ENCODE measurements at regions of chr6 and their contacts with region 1.

Region 1: DNA sequence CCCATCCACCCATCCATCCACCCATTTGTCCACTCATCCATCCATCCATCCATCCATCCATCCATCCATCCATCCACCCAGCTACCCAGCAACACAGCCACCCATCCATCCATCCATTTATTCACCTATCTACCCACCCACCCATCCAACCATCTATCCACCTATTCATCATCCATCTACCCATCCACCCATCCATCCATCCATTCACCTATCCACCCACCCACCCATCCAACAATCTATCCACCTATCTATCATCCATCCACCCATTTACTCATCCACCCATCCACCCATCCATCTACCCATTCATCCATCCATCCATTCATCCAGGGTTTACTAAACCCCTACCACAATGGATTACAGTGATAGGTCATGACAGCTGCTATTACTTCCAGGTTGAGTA is 7.4 kb downstream of the SERPINB1 start:
- DNase-seq: no peak
- H3K4me3 ChIP-seq: no peak overlapping the region
- H3K27ac ChIP-seq: no peak overlapping the region
- H3K4me1 ChIP-seq: peaks cover 5% of the 10 kb centered on the region
- H3K27me3 ChIP-seq: no peaks in the 10 kb centered on the region
- CTCF ChIP-seq: no peak

Region 2: DNA sequence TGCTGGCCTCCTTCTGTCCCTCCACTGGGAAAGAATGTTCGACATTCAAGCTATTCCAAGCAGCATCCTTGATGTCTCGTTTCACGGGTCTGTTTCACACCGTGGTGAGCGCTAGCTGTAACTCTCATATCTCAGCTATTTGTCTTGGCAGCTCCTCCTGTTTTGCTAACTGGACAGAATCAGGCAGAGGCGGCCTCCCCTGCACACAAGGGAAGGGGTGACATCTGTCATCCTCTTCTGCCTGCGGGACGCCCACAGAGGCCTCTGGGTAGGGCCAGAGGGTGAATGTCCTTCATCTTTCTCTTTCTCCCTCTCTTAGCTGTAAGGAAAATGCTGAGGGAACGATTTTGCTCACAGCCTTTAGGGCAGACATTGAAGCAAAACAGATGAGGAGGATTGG is 356.1 kb before region 1 on chr6:
- CTCF ChIA-PET with region 1: no interaction called
- dilution Hi-C with region 1: no loop called
- in situ Hi-C with region 1: no loop called
- intact Hi-C with region 1: no loop called
- DNase-seq: no peak
- H3K4me3 ChIP-seq: no peak overlapping the region
- H3K27ac ChIP-seq: no peak overlapping the region
- H3K4me1 ChIP-seq: peaks cover 6% of the 10 kb centered on the region
- H3K27me3 ChIP-seq: no peaks in the 10 kb centered on the region
- CTCF ChIP-seq: no peak

Region 3: GRCh38 chr6:2818593-2818992 is 15.7 kb before region 1 on chr6:
- CTCF ChIA-PET with region 1: no interaction called
- dilution Hi-C with region 1: no loop called
- in situ Hi-C with region 1: no loop called
- intact Hi-C with region 1: loop called (anchors 1 kb)
- DNase-seq: peak; percentile 84
- H3K4me3 ChIP-seq: peak overlapping the region in 1 of 3 experiments; percentile 6
- H3K27ac ChIP-seq: peak overlapping the region; percentile 99
- H3K4me1 ChIP-seq: peaks cover 26% of the 10 kb centered on the region
- H3K27me3 ChIP-seq: no peaks in the 10 kb centered on the region
- CTCF ChIP-seq: no peak

Region 4: GRCh38 chr6:3269281-3269975 is 435.2 kb after region 1 on chr6:
- CTCF ChIA-PET with region 1: no interaction called
- dilution Hi-C with region 1: no loop called
- in situ Hi-C with region 1: no loop called
- intact Hi-C with region 1: no loop called
- DNase-seq: no peak
- H3K4me3 ChIP-seq: no peak overlapping the region
- H3K27ac ChIP-seq: no peak overlapping the region
- H3K4me1 ChIP-seq: no peaks in the 10 kb centered on the region
- H3K27me3 ChIP-seq: no peaks in the 10 kb centered on the region
- CTCF ChIP-seq: no peak